AG04450 (cell line): ENCODE measurements at regions of chr22 and their contacts with region 1.

Region 1: DNA sequence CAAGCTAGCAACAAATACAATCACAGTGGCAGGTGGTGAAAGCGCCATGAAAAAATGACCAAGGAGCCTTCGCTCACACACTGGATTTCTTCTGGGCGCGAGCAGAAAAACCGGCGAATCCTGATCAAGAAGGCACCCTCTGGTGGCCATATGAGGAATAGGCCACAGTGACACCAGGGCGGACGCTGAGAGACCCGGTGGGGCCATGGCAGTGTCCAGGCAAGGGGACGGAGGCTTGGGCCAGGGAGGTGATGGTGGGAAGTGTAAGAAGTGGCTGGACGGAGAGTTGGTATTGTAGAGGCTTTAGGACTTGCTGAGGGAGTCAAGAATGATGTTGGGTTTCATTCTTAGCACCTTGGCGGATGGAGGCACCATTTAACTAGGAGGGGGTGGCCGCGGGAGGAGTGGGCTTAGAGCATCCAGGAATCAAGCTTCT is 16.9 kb upstream of the RAC2 start:
- DNase-seq: no peak
- H3K4me3 ChIP-seq: no peak overlapping the region
- H3K27ac ChIP-seq: no peak overlapping the region
- H3K27me3 ChIP-seq: peaks cover 5% of the 10 kb centered on the region
- CTCF ChIP-seq: peak; percentile 93

Region 2: DNA sequence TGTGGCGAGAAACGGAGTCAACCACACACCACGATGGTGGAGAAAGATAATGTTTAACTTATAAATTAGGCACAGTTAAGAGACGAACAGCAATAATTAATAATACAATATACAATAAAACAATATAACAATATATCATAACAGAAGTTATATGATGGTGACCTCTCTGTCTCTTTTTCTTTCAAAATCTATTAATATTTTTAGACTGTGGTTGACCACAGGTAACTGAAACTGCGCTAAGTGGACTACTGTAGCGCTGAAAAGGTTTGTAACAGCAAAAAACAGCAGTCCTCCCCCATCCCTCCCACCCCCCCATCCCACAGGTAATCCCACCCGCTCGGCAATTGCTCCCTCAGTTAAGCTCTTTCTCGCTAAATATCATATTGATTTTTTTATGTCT is 45.0 kb before region 1 on chr22:
- CTCF ChIA-PET with region 1: interaction called, 10 read pairs
- POLR2A ChIA-PET with region 1: no interaction called
- DNase-seq: no peak
- H3K4me3 ChIP-seq: no peak overlapping the region
- H3K27ac ChIP-seq: no peak overlapping the region
- H3K27me3 ChIP-seq: peaks cover 48% of the 10 kb centered on the region
- CTCF ChIP-seq: no peak

Region 3: GRCh38 chr22:37244114-37244921 is 16.6 kb before region 1 on chr22 and contains the start of gene RAC2:
- CTCF ChIA-PET with region 1: interaction called, 50 read pairs
- POLR2A ChIA-PET with region 1: no interaction called
- DNase-seq: no peak
- H3K4me3 ChIP-seq: peak within 1 kb of the TSS; percentile 60
- H3K27ac ChIP-seq: no peak within 1 kb of the TSS
- H3K27me3 ChIP-seq: no peaks in the 10 kb centered on the region
- CTCF ChIP-seq: no peak
- polyA plus RNA-seq, gene RAC2: 25.0 and 35.9 TPM in 2 replicates

Region 4: DNA sequence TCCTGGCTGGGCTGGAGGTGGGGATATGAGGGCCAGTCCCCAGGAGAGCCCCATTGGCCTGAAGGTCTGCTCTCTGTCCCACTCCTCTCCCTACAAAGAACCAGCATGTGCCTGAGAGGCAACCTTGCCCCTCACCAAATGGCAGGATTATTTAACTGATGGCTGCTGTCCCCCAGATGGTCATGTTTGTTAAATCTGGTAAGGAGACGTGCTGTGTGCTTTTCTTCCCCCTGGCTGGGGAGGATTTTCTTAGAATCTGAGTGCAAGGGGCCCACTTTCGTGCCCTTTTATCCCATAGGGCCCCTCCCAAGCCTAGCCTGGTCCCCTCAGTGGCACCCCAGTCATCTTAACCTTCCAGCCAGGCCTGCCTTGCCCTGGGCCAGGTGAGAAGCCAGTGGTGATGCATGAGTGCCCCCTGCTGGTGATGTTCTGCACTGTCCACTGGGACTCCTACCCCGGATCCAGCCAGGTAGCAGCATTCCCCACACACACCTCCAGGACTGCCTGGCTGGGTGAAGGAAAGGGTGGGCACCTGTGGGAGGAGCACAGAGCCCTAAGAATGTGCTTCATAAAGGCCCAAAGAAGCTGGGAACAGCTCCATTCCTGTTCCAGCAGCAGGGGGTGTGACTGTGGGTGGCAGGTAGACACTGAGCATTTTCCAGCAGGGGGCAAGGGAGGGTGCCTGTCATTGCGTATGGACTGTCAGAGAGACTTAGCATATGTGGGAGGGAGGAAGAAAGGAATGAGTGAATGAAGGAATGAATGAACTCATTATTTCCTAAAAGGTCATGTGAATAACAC is 196.4 kb after region 1 on chr22:
- CTCF ChIA-PET with region 1: interaction called, 23 read pairs
- POLR2A ChIA-PET with region 1: no interaction called
- DNase-seq: no peak
- H3K4me3 ChIP-seq: no peak overlapping the region
- H3K27ac ChIP-seq: no peak overlapping the region
- H3K27me3 ChIP-seq: peaks cover 8% of the 10 kb centered on the region
- CTCF ChIP-seq: peak; percentile 96